Prostate gland (tissue), 2 donors: ENCODE measurements at regions of chrX and their contacts with region 1.

Region 1: GRCh38 chrX:84729809-84730208 is 227.6 kb upstream of the HDX start:
- DNase-seq: no peak
- H3K4me3 ChIP-seq: no peak overlapping the region
- H3K27ac ChIP-seq: no peak overlapping the region
- H3K4me1 ChIP-seq: no peaks in the 10 kb centered on the region
- H3K27me3 ChIP-seq: no peaks in the 10 kb centered on the region
- CTCF ChIP-seq: peak; percentile 22 to 52 (median 40)
- POLR2A ChIP-seq: no peak

Region 2: GRCh38 chrX:84907324-84907968 is 177.6 kb after region 1 on chrX:
- intact Hi-C with region 1: loop called (anchors 5 kb)
- DNase-seq: no peak
- H3K4me3 ChIP-seq: no peak overlapping the region
- H3K27ac ChIP-seq: no peak overlapping the region
- H3K4me1 ChIP-seq: no peaks in the 10 kb centered on the region
- H3K27me3 ChIP-seq: no peaks in the 10 kb centered on the region
- CTCF ChIP-seq: peak in 3 of 4 experiments; percentile 16 to 26 (median 23)
- POLR2A ChIP-seq: no peak

Region 3: GRCh38 chrX:85052636-85053343 is 323.0 kb after region 1 on chrX:
- intact Hi-C with region 1: loop called (anchors 5 kb)
- DNase-seq: no peak
- H3K4me3 ChIP-seq: no peak overlapping the region
- H3K27ac ChIP-seq: no peak overlapping the region
- H3K4me1 ChIP-seq: no peaks in the 10 kb centered on the region
- H3K27me3 ChIP-seq: no peaks in the 10 kb centered on the region
- CTCF ChIP-seq: peak in 1 of 4 experiments; percentile 12
- POLR2A ChIP-seq: no peak